Activated CD8-positive, alpha-beta T cell treated with anti-CD3 and anti-CD28 coated beads for 36 hours (primary cell): ENCODE measurements at regions of chr17 and their contacts with region 1.

Region 1: DNA sequence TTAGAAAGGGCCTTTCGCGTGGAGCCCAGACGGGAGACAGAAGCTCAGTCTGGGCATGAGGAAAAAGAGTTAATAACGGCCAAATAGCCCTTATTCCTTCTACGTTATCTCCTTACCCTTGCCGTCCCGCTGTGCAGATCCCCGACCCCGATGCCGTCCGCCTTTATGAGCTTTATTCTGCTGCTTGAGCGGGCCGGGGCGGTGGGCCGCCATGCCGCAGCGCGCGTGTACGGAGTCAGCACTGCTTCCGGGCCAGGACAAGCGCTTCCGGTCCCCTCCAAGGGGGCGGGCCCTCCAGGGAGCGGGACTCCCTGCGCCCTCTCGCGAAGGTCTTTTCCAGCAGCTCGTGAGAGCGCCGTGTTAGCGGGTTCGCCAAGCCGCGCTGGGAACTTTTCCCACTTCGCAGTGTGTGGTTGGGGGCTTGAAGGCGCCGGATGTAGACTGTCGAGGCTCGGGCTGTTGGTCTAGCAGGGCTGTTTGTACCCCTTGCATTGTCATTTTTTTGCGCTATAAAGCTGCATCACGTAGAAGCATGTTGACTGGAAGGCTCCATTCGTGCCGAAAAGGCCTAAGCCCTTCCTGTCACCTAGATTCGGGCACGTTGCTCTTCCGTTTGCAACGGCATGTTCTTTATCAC is at the start of gene TSR1:
- DNase-seq: peak; percentile 92
- ATAC-seq: peak; percentile 88
- H3K4me3 Mint-ChIP-seq: no peak within 1 kb of the TSS
- H3K27ac Mint-ChIP-seq: peak within 1 kb of the TSS; percentile 96
- H3K4me1 Mint-ChIP-seq: peaks cover 9% of the 10 kb centered on the region
- H3K27me3 Mint-ChIP-seq: no peaks in the 10 kb centered on the region
- CTCF ChIP-seq: no peak
- total RNA-seq, gene TSR1: 75.8 to 79.4 TPM

Region 2: GRCh38 chr17:2195729-2196128 is 140.6 kb before region 1 on chr17:
- CTCF ChIA-PET with region 1: no interaction called
- POLR2A ChIA-PET with region 1: no interaction called
- intact Hi-C with region 1: no loop called
- DNase-seq: peak; percentile 81
- ATAC-seq: peak; percentile 80
- H3K4me3 Mint-ChIP-seq: no peak overlapping the region
- H3K27ac Mint-ChIP-seq: peak overlapping the region; percentile 50
- H3K4me1 Mint-ChIP-seq: peaks cover 51% of the 10 kb centered on the region
- H3K27me3 Mint-ChIP-seq: no peaks in the 10 kb centered on the region
- CTCF ChIP-seq: no peak

Region 3: DNA sequence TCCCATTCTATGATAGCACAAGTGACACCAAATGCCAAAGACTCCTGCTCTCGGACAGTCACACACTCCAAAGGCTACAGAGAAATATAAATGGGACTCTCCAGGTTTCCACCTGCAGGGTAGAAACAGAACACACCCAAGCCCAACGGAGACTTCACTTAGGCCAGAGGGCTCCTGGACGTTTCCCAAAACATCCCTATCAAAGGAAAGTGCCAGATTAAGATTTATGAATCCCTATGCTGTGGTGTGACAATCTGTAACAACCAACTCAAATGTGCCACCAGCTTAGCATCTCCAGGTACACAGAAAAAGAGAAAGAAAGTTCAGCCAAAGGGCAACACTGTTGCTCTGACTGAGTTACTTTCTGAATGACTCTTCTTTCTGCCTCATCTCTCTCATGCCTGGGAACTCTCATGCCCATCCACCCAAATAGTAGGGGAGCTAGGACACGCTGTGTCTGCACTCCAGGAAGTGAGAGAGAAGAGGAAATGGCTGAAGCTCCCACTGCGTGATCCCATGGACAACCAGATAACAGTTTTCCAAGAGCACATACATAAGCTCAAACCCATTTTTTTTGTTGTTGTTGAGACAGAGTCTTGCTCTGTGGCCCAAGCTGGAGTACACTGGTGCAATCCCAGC is 82.4 kb before region 1 on chr17:
- CTCF ChIA-PET with region 1: no interaction called
- POLR2A ChIA-PET with region 1: no interaction called
- intact Hi-C with region 1: loop called (anchors 5 kb)
- DNase-seq: peak; percentile 64
- ATAC-seq: peak; percentile 87
- H3K4me3 Mint-ChIP-seq: peak overlapping the region; percentile 45
- H3K27ac Mint-ChIP-seq: peak overlapping the region; percentile 89
- H3K4me1 Mint-ChIP-seq: peaks cover 73% of the 10 kb centered on the region
- H3K27me3 Mint-ChIP-seq: no peaks in the 10 kb centered on the region
- CTCF ChIP-seq: no peak

Region 4: GRCh38 chr17:2303204-2304188 is 32.8 kb before region 1 on chr17 and contains the starts of genes SMG6 and SRR:
- CTCF ChIA-PET with region 1: interaction called, 10 read pairs
- POLR2A ChIA-PET with region 1: interaction called, 8 read pairs
- intact Hi-C with region 1: no loop called
- DNase-seq: peak; percentile 95
- ATAC-seq: peak; percentile 90
- H3K4me3 Mint-ChIP-seq: peak within 1 kb of the TSS; percentile 92
- H3K27ac Mint-ChIP-seq: peak within 1 kb of the TSS; percentile 83
- H3K4me1 Mint-ChIP-seq: peaks cover 38% of the 10 kb centered on the region
- H3K27me3 Mint-ChIP-seq: no peaks in the 10 kb centered on the region
- CTCF ChIP-seq: no peak
- total RNA-seq, gene SMG6: 39.6 to 40.4 TPM
- total RNA-seq, gene SRR: 9.6 to 12.7 TPM

Region 5: DNA sequence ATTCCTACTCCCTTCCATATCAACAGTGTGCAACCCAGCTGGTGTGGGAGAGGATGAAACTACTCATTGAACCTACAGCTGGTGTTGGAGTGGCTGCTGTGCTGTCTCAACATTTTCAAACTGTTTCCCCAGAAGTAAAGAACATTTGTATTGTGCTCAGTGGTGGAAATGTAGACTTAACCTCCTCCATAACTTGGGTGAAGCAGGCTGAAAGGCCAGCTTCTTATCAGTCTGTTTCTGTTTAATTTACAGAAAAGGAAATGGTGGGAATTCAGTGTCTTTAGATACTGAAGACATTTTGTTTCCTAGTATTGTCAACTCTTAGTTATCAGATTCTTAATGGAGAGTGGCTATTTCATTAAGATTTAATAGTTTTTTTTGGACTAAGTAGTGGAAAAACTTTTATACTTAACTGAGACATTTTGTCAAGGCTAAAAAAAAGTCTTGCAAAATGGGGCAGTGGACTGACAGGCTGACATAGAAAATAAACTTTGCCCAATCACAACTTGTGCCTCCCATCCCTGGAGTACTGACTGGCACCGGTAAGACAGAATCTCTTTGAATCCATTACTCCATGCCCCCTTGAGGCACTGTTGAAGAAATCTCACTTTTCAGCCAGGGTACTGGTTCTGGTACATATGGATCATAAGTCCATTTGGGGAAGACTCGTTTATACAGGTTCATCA is 12.6 kb before region 1 on chr17:
- CTCF ChIA-PET with region 1: interaction called, 5 read pairs
- POLR2A ChIA-PET with region 1: interaction called, 114 read pairs
- intact Hi-C with region 1: no loop called
- DNase-seq: no peak
- ATAC-seq: no peak
- H3K4me3 Mint-ChIP-seq: no peak overlapping the region
- H3K27ac Mint-ChIP-seq: no peak overlapping the region
- H3K4me1 Mint-ChIP-seq: peaks cover 3% of the 10 kb centered on the region
- H3K27me3 Mint-ChIP-seq: no peaks in the 10 kb centered on the region
- CTCF ChIP-seq: no peak

Region 6: GRCh38 chr17:2347547-2348307 is 11.4 kb after region 1 on chr17:
- CTCF ChIA-PET with region 1: interaction called, 20 read pairs
- POLR2A ChIA-PET with region 1: interaction called, 10 read pairs
- intact Hi-C with region 1: no loop called
- DNase-seq: no peak
- ATAC-seq: no peak
- H3K4me3 Mint-ChIP-seq: no peak overlapping the region
- H3K27ac Mint-ChIP-seq: no peak overlapping the region
- H3K4me1 Mint-ChIP-seq: peaks cover 9% of the 10 kb centered on the region
- H3K27me3 Mint-ChIP-seq: no peaks in the 10 kb centered on the region
- CTCF ChIP-seq: no peak

Region 7: GRCh38 chr17:2354311-2354710 is 18.0 kb after region 1 on chr17:
- CTCF ChIA-PET with region 1: interaction called, 20 read pairs
- POLR2A ChIA-PET with region 1: interaction called, 6 read pairs
- intact Hi-C with region 1: no loop called
- DNase-seq: no peak
- ATAC-seq: no peak
- H3K4me3 Mint-ChIP-seq: no peak overlapping the region
- H3K27ac Mint-ChIP-seq: peak overlapping the region; percentile 28
- H3K4me1 Mint-ChIP-seq: peaks cover 16% of the 10 kb centered on the region
- H3K27me3 Mint-ChIP-seq: no peaks in the 10 kb centered on the region
- CTCF ChIP-seq: no peak

Region 8: GRCh38 chr17:2392252-2393173 is 56.2 kb after region 1 on chr17:
- CTCF ChIA-PET with region 1: no interaction called
- POLR2A ChIA-PET with region 1: interaction called, 22 read pairs
- intact Hi-C with region 1: no loop called
- DNase-seq: peak; percentile 97
- ATAC-seq: peak; percentile 73
- H3K4me3 Mint-ChIP-seq: peak overlapping the region; percentile 95
- H3K27ac Mint-ChIP-seq: peak overlapping the region; percentile 95
- H3K4me1 Mint-ChIP-seq: peaks cover 54% of the 10 kb centered on the region
- H3K27me3 Mint-ChIP-seq: no peaks in the 10 kb centered on the region
- CTCF ChIP-seq: no peak